ENCODE measurements at regions of chr13 and their contacts with region 1.

Region 1: DNA sequence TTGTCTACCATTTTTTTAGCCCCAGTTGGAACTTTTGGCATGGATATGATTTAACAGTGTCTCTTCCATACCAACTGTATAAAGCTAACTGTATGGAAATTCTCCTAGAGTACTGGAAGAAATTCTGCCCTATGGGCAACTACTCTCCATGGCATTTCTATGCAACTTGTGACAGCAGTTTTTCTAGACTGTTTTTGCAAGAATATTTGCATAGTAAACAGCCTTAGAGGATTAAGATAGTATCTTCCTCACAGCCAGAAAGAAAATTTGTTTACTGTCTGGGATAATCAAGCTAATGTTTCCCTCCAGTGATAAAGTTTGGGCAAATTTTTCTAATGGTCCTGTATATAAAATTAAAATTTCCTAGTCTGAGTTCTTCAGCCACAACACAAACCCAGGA is 119.9 kb upstream of the PCDH17 start:
- DNase-seq: no peak
- H3K4me3 ChIP-seq: no peak overlapping the region
- H3K4me3 Mint-ChIP-seq: no peak overlapping the region
- H3K27ac Mint-ChIP-seq: no peak overlapping the region
- H3K4me1 ChIP-seq: no peaks in the 10 kb centered on the region
- H3K4me1 Mint-ChIP-seq: no peaks in the 10 kb centered on the region
- H3K27me3 ChIP-seq: no peaks in the 10 kb centered on the region
- H3K27me3 Mint-ChIP-seq: no peaks in the 10 kb centered on the region
- CTCF ChIP-seq: no peak

Region 2: GRCh38 chr13:57558051-57558467 is 46.4 kb after region 1 on chr13:
- CTCF ChIA-PET with region 1: no interaction called
- POLR2A ChIA-PET with region 1: no interaction called
- intact Hi-C with region 1: loop called (anchors 5 kb)
- DNase-seq: no peak
- H3K4me3 ChIP-seq: no peak overlapping the region
- H3K4me3 Mint-ChIP-seq: no peak overlapping the region
- H3K27ac Mint-ChIP-seq: no peak overlapping the region
- H3K4me1 ChIP-seq: no peaks in the 10 kb centered on the region
- H3K4me1 Mint-ChIP-seq: no peaks in the 10 kb centered on the region
- H3K27me3 ChIP-seq: no peaks in the 10 kb centered on the region
- H3K27me3 Mint-ChIP-seq: peaks cover 3% of the 10 kb centered on the region
- CTCF ChIP-seq: peak in 1 of 2 experiments; percentile 43